Mammary epithelial cell (primary cell): ENCODE measurements at regions of chr19 and their contacts with region 1.

Region 1: DNA sequence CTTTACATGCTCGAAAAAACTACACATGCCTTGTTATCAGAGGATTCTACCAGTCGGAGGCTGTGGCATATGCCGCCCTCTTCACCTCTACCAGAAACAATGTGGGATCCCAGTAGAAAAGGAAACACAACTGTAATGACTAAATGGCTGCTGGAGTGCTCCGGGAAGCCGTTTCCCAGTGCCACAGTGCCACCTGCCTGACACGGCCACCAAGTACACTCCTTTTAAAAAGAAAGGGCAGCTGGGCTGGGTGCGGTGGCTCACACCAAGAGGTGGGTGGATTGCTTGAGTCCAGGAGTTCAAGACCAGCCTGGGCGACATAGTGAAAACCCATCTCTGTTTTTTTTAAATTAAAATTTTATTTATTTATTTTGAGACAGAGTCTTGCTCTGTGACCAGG is 67.3 kb downstream of the TRPM4 start:
- DNase-seq: peak; percentile 63
- H3K4me3 ChIP-seq: no peak overlapping the region
- H3K27ac ChIP-seq: no peak overlapping the region
- H3K4me1 ChIP-seq: no peaks in the 10 kb centered on the region
- H3K27me3 ChIP-seq: no peaks in the 10 kb centered on the region
- CTCF ChIP-seq: peak; percentile 55 to 66

Region 2: GRCh38 chr19:48784540-48784939 is 440.3 kb before region 1 on chr19:
- CTCF ChIA-PET with region 1: no interaction called
- dilution Hi-C with region 1: no loop called
- in situ Hi-C with region 1: loop called in 1 of 2 experiments (anchors 25 kb)
- intact Hi-C with region 1: loop called (anchors 1 kb)
- DNase-seq: no peak
- H3K4me3 ChIP-seq: no peak overlapping the region
- H3K27ac ChIP-seq: no peak overlapping the region
- H3K4me1 ChIP-seq: peaks cover 8% of the 10 kb centered on the region
- H3K27me3 ChIP-seq: no peaks in the 10 kb centered on the region
- CTCF ChIP-seq: no peak

Region 3: GRCh38 chr19:48993175-48994034 is 231.5 kb before region 1 on chr19 and contains the starts of genes GYS1 and RUVBL2:
- CTCF ChIA-PET with region 1: interaction called, 25 read pairs
- dilution Hi-C with region 1: no loop called
- in situ Hi-C with region 1: no loop called
- intact Hi-C with region 1: no loop called
- DNase-seq: peak; percentile 100
- H3K4me3 ChIP-seq: peak within 1 kb of the TSS; percentile 81 to 89 (median 86)
- H3K27ac ChIP-seq: peak within 1 kb of the TSS; percentile 86
- H3K4me1 ChIP-seq: peaks cover 28% of the 10 kb centered on the region
- H3K27me3 ChIP-seq: no peaks in the 10 kb centered on the region
- CTCF ChIP-seq: peak; percentile 83 to 92
- total RNA-seq, gene GYS1: 40.0 to 79.8 TPM
- total RNA-seq, gene RUVBL2: 108 to 148 TPM

Region 4: DNA sequence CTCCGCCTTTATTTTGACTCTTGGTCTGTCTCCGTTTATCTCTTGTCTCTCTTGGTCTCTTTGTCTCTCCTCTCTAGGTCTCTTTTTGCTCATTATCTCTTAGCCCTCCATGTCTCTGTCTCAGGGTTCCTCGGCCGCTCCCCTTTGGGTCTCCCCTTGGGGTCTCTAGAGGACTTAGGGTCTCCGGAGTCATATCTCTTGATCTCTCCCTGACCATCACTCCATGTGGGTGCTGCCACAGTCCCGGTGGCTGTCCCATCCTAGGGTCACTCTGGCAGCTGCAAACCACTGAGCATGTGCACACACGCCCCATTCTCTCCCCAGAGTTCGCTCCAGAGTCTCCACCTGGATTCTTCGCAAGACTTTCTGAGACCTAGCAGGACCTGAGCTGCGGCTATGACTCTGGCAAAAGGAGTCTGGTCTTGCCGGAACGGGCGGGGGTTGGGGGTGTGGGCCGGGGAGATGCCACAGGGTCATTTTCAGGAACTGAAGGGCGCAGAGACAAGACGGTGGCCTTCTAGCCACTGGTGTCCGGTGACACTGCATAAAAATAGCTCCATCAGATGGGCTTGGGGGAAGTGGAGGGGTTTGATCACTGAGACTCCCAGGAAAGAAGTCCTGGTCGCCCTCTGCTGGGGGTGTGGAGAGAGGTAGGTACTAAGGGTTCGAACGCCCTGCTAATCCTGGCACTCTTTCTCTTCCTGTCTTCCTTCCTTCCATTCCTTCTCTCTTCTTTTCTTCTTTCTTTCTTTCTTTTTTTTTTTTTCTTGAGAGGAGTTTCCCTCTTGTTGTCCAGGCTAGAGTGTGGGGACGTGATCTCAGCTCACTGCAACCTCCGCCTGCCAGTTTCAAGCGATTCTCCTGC is 151.1 kb before region 1 on chr19:
- CTCF ChIA-PET with region 1: no interaction called
- dilution Hi-C with region 1: no loop called
- in situ Hi-C with region 1: no loop called
- intact Hi-C with region 1: loop called (anchors 1 kb)
- DNase-seq: peak; percentile 57
- H3K4me3 ChIP-seq: peak overlapping the region in 1 of 3 experiments; percentile 14
- H3K27ac ChIP-seq: no peak overlapping the region
- H3K4me1 ChIP-seq: peaks cover 13% of the 10 kb centered on the region
- H3K27me3 ChIP-seq: peaks cover 18% of the 10 kb centered on the region
- CTCF ChIP-seq: peak; percentile 26 to 49

Region 5: GRCh38 chr19:49182848-49183344 is 42.0 kb before region 1 on chr19:
- CTCF ChIA-PET with region 1: no interaction called
- dilution Hi-C with region 1: no loop called
- in situ Hi-C with region 1: no loop called
- intact Hi-C with region 1: no loop called
- DNase-seq: no peak
- H3K4me3 ChIP-seq: no peak overlapping the region
- H3K27ac ChIP-seq: no peak overlapping the region
- H3K4me1 ChIP-seq: no peaks in the 10 kb centered on the region
- H3K27me3 ChIP-seq: no peaks in the 10 kb centered on the region
- CTCF ChIP-seq: no peak

Region 6: DNA sequence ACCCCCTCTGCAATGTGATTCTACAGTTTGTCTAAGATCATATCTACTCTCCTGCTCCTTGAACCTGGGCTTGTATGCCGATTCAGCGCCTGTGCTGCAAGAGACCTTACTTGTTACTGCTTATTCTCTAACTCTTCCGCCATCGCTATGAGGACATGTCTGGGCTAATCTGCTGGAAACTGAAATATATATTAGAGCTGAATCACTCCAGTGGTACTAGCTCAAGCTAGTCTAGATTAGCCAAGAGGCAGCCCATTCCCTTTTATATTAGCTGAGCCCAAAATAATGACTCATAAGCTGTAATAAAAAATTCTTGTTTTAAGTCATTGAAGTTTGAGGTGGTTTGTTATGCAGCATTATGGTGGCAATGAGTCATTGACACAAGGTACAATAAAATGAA is 47.3 kb after region 1 on chr19:
- CTCF ChIA-PET with region 1: interaction called, 10 read pairs
- dilution Hi-C with region 1: no loop called
- in situ Hi-C with region 1: no loop called
- intact Hi-C with region 1: no loop called
- DNase-seq: peak; percentile 97
- H3K4me3 ChIP-seq: no peak overlapping the region
- H3K27ac ChIP-seq: peak overlapping the region; percentile 69
- H3K4me1 ChIP-seq: peaks cover 22% of the 10 kb centered on the region
- H3K27me3 ChIP-seq: no peaks in the 10 kb centered on the region
- CTCF ChIP-seq: no peak

Region 7: GRCh38 chr19:49327878-49328544 is 103.2 kb after region 1 on chr19:
- CTCF ChIA-PET with region 1: no interaction called
- dilution Hi-C with region 1: no loop called
- in situ Hi-C with region 1: no loop called
- intact Hi-C with region 1: loop called (anchors 1 kb)
- DNase-seq: no peak
- H3K4me3 ChIP-seq: no peak overlapping the region
- H3K27ac ChIP-seq: no peak overlapping the region
- H3K4me1 ChIP-seq: no peaks in the 10 kb centered on the region
- H3K27me3 ChIP-seq: no peaks in the 10 kb centered on the region
- CTCF ChIP-seq: peak; percentile 76 to 86

Region 8: DNA sequence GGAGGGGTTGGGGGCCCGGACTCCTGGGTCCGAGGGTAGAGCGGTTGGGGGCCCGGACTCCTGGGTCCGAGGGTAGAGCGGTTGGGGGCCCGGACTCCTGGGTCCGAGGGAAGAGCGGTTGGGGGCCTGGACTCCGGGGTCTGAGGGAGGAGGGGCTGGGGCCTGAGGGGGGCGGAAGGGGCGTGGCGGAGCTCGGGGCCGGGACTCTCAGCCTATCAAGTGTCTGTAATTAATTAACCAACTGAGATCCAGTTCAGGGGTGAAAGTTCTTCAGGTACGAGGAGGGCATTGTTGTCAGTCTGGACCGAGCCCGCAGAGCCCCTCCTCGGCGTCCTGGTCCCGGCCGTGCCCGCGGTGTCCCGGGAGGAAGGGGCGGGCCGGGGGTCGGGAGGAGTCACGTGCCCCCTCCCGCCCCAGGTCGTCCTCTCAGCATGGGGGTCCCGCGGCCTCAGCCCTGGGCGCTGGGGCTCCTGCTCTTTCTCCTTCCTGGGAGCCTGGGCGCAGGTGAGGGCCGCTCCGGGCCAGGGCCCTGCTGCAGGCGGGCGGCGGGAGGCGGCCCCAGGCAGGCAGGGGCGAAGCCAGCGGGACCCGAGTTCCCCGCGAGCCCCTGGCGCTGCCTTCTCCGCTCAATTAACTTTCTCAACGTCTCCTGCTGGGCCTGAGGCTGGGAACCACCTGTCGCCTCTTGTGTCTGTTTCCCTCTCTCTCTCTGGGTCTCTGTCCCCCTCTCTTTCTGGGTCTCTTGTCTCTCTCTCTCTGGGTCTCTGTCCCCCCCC is 288.3 kb after region 1 on chr19:
- CTCF ChIA-PET with region 1: no interaction called
- dilution Hi-C with region 1: loop called (anchors 5 kb)
- in situ Hi-C with region 1: no loop called
- intact Hi-C with region 1: no loop called
- DNase-seq: no peak
- H3K4me3 ChIP-seq: peak overlapping the region in 2 of 3 experiments; percentile 32 to 36
- H3K27ac ChIP-seq: no peak overlapping the region
- H3K4me1 ChIP-seq: peaks cover 7% of the 10 kb centered on the region
- H3K27me3 ChIP-seq: peaks cover 4% of the 10 kb centered on the region
- CTCF ChIP-seq: no peak